ENCODE measurements at regions of chr9 and their contacts with region 1.

Region 1: GRCh38 chr9:105087910-105088888 is 156.3 kb upstream of the SLC44A1 start:
- DNase-seq: no peak
- H3K4me3 ChIP-seq: no peak overlapping the region
- H3K27ac ChIP-seq: no peak overlapping the region
- H3K4me1 ChIP-seq: no peaks in the 10 kb centered on the region
- H3K27me3 ChIP-seq: no peaks in the 10 kb centered on the region
- CTCF ChIP-seq: no peak

Region 2: GRCh38 chr9:105138306-105138801 is 50.2 kb after region 1 on chr9:
- intact Hi-C with region 1: loop called (anchors 10 kb)
- DNase-seq: peak; percentile 22
- H3K4me3 ChIP-seq: no peak overlapping the region
- H3K27ac ChIP-seq: no peak overlapping the region
- H3K4me1 ChIP-seq: no peaks in the 10 kb centered on the region
- H3K27me3 ChIP-seq: no peaks in the 10 kb centered on the region
- CTCF ChIP-seq: no peak

Region 3: GRCh38 chr9:105447814-105448812 is 359.9 kb after region 1 on chr9 and contains the start of gene FSD1L:
- intact Hi-C with region 1: no loop called
- DNase-seq: peak; percentile 95
- H3K4me3 ChIP-seq: peak within 1 kb of the TSS; percentile 90
- H3K27ac ChIP-seq: peak within 1 kb of the TSS; percentile 58
- H3K4me1 ChIP-seq: peaks cover 3% of the 10 kb centered on the region
- H3K27me3 ChIP-seq: no peaks in the 10 kb centered on the region
- CTCF ChIP-seq: no peak
- total RNA-seq, gene FSD1L: 4.3 to 6.0 TPM